AG04450 (cell line): ENCODE measurements at regions of chr5 and their contacts with region 1.

Region 1: GRCh38 chr5:43484106-43484849 is 613 bp upstream of the TMEM267 start:
- DNase-seq: peak; percentile 45
- H3K4me3 ChIP-seq: peak overlapping the region; percentile 87
- H3K27ac ChIP-seq: peak overlapping the region; percentile 95
- H3K27me3 ChIP-seq: no peaks in the 10 kb centered on the region
- CTCF ChIP-seq: peak; percentile 70

Region 2: GRCh38 chr5:43305948-43306565 is 178.2 kb before region 1 on chr5:
- CTCF ChIA-PET with region 1: interaction called, 11 read pairs
- POLR2A ChIA-PET with region 1: no interaction called
- DNase-seq: peak; percentile 32
- H3K4me3 ChIP-seq: no peak overlapping the region
- H3K27ac ChIP-seq: no peak overlapping the region
- H3K27me3 ChIP-seq: no peaks in the 10 kb centered on the region
- CTCF ChIP-seq: peak; percentile 77

Region 3: GRCh38 chr5:43389679-43390329 is 94.5 kb before region 1 on chr5:
- CTCF ChIA-PET with region 1: interaction called, 16 read pairs
- POLR2A ChIA-PET with region 1: no interaction called
- DNase-seq: peak; percentile 75
- H3K4me3 ChIP-seq: no peak overlapping the region
- H3K27ac ChIP-seq: no peak overlapping the region
- H3K27me3 ChIP-seq: no peaks in the 10 kb centered on the region
- CTCF ChIP-seq: peak; percentile 88

Region 4: GRCh38 chr5:43453606-43454005 is 30.7 kb before region 1 on chr5:
- CTCF ChIA-PET with region 1: interaction called, 14 read pairs
- POLR2A ChIA-PET with region 1: interaction called, 5 read pairs
- DNase-seq: no peak
- H3K4me3 ChIP-seq: no peak overlapping the region
- H3K27ac ChIP-seq: no peak overlapping the region
- H3K27me3 ChIP-seq: no peaks in the 10 kb centered on the region
- CTCF ChIP-seq: no peak

Region 5: DNA sequence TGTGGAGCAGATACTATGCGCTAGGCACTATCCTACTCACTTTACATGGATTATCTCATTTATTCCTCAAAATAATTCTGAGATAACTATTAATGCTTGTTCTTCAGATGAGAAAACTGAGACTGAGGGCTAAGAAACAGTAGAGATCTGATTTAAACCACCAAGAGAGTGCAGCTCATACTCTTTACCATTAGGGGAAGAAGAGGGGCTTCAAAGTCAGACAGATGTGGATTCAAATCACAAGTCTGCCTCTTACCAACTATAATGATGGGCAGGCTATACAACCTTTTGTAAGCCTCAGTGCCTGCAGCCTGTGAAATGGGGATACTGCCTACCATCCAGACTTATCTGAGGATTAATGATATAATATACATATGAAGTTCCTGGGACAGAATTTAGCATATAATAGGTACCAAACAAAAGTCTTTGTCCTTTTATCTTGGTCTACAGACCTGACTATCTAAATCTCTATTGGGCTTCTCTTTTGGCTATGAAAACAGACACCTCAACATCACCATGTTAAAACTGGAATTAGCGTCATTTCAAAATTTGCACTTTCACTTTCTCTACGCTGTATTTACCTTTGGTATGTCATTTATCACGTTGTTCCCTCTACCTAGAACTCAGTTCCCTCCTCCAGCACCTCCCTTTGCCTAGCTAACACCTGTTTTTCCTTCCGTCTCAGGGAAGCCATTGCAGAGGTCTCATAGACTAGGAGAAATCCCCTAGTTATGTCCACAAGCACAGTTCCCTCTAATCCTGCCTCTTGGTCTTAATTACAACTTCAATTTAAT is 13.2 kb after region 1 on chr5:
- CTCF ChIA-PET with region 1: interaction called, 12 read pairs
- POLR2A ChIA-PET with region 1: no interaction called
- DNase-seq: no peak
- H3K4me3 ChIP-seq: no peak overlapping the region
- H3K27ac ChIP-seq: no peak overlapping the region
- H3K27me3 ChIP-seq: no peaks in the 10 kb centered on the region
- CTCF ChIP-seq: no peak

Region 6: GRCh38 chr5:43567967-43568366 is 83.7 kb after region 1 on chr5:
- CTCF ChIA-PET with region 1: no interaction called
- POLR2A ChIA-PET with region 1: no interaction called
- DNase-seq: no peak
- H3K4me3 ChIP-seq: no peak overlapping the region
- H3K27ac ChIP-seq: no peak overlapping the region
- H3K27me3 ChIP-seq: no peaks in the 10 kb centered on the region
- CTCF ChIP-seq: no peak

Region 7: DNA sequence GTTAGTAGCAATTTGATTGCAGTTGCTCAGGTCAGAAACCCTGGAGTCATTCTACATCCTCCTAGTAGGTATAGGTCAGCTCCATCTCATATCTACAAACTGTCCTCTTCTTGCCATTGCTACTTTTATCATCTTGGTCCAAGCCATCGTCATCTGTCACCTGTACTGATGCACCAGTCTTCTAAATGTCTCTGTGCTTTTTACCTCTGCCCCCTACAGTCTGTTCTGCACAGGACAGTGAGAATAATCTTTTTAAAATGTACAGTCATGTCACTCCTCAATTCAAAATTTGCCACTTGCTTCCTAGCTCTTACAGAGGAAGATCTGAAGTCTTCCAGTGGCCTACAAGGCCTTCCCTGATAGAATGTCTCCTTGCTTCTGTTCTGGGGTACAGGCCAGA is 125.5 kb after region 1 on chr5:
- CTCF ChIA-PET with region 1: no interaction called
- POLR2A ChIA-PET with region 1: no interaction called
- DNase-seq: no peak
- H3K4me3 ChIP-seq: no peak overlapping the region
- H3K27ac ChIP-seq: no peak overlapping the region
- H3K27me3 ChIP-seq: no peaks in the 10 kb centered on the region
- CTCF ChIP-seq: peak; percentile 26; the same call in 1 of the 2 replicates